H1 (cell line): ENCODE measurements at regions of chr7 and their contacts with region 1.

Region 1: DNA sequence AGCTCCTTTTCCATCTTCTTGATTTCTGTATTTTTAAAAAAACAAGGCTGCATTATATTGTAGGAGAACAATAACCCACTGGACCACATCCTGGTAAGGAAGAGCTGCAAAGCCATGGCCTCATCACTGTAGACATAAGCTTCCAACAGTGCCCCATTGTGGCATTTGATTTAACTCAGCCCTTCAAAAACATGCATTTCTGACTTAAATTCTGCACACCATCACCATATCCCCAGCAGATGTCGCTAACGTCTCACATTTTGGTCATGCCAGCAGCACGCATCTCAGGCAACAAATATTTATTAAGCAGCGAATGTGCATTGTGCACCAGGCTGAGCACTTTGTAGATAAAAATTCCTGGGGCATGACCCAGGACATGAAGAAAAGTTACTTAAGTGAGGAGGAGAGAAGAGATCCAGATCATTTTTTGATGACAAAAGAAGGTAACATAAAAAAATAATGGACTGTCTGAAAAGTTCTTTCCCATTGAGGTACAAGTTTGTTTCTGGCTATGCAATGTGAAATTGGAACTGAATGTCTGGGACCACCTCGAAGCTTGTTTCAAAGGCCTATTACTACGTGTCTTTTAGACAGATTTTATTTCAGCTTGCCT is 164.6 kb upstream of the CDCA7L start:
- DNase-seq: peak; percentile 59 to 68
- H3K4me3 ChIP-seq: no peak overlapping the region
- H3K27ac ChIP-seq: no peak overlapping the region
- H3K4me1 ChIP-seq: 0 out of 7 replicates have a peak, but pooled peaks cover 0 to 2% (median 0%) of the 10 kb centered on the region in 4 experiments
- H3K27me3 ChIP-seq: no peaks in the 10 kb centered on the region
- CTCF ChIP-seq: peak; percentile 44 to 94 (median 93)
- EP300 ChIP-seq: no peak
- POLR2A ChIP-seq: no peak
- RAD21 ChIP-seq: peak; percentile 99

Region 2: GRCh38 chr7:22082886-22083703 is 27.2 kb before region 1 on chr7:
- CTCF ChIA-PET with region 1: interaction called, 36 read pairs
- POLR2A ChIA-PET with region 1: no interaction called
- DNase-seq: peak; percentile 80 to 100
- H3K4me3 ChIP-seq: peak overlapping the region; percentile 45 to 75 (median 66)
- H3K27ac ChIP-seq: no peak overlapping the region
- H3K4me1 ChIP-seq: peaks cover 0 to 3% (median 3%) of the 10 kb centered on the region in 4 experiments; a peak in 4 of 7 replicates
- H3K27me3 ChIP-seq: peaks cover 0 to 7% (median 6%) of the 10 kb centered on the region in 4 experiments; a peak in 5 of 7 replicates
- CTCF ChIP-seq: peak; percentile 83 to 94 (median 91)
- EP300 ChIP-seq: peak; percentile 55 to 57; a peak in 2 of 3 replicates
- POLR2A ChIP-seq: no peak; a peak in 1 of 3 replicates
- RAD21 ChIP-seq: peak; percentile 87 to 94

Region 3: GRCh38 chr7:22154143-22154529 is 43.8 kb after region 1 on chr7:
- CTCF ChIA-PET with region 1: interaction called, 16 read pairs
- POLR2A ChIA-PET with region 1: no interaction called
- DNase-seq: no peak
- H3K4me3 ChIP-seq: no peak overlapping the region; a peak in 1 of 8 replicates
- H3K27ac ChIP-seq: no peak overlapping the region
- H3K4me1 ChIP-seq: peaks cover 0 to 7% (median 3%) of the 10 kb centered on the region in 4 experiments; a peak in 4 of 7 replicates
- H3K27me3 ChIP-seq: no peaks in the 10 kb centered on the region
- CTCF ChIP-seq: no peak
- EP300 ChIP-seq: no peak
- POLR2A ChIP-seq: no peak
- RAD21 ChIP-seq: no peak

Region 4: DNA sequence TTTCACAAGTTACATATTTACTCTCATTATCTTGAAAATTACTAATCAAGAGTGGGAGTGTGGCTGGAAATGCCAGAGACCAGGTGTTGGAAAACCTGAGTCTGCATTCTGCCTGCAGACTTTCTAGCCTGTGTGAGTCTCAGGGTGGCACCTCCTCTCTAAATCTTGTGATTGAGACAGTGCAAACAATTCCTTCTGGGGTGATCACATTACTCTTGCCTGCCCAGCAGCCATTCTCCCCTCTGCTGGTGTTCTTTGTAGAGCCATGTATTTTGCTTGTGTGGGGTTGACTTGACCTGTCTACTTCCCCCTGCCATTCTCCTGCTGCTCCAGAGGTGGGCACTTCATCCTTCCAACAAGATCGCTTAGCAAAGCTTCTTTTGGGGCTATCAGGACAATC is 145.5 kb after region 1 on chr7:
- CTCF ChIA-PET with region 1: interaction called, 16 read pairs
- POLR2A ChIA-PET with region 1: no interaction called
- DNase-seq: no peak
- H3K4me3 ChIP-seq: no peak overlapping the region
- H3K27ac ChIP-seq: no peak overlapping the region
- H3K4me1 ChIP-seq: peaks cover 2 to 20% (median 12%) of the 10 kb centered on the region in 4 experiments; a peak in 6 of 7 replicates
- H3K27me3 ChIP-seq: no peaks in the 10 kb centered on the region
- CTCF ChIP-seq: peak in 1 of 3 experiments; percentile 12; a peak in 1 of 4 replicates
- EP300 ChIP-seq: no peak
- POLR2A ChIP-seq: no peak
- RAD21 ChIP-seq: peak in 1 of 2 experiments; percentile 15; a peak in 1 of 4 replicates

Region 5: GRCh38 chr7:22319424-22320403 is 209.4 kb after region 1 on chr7:
- CTCF ChIA-PET with region 1: interaction called, 13 read pairs
- POLR2A ChIA-PET with region 1: no interaction called
- DNase-seq: no peak
- H3K4me3 ChIP-seq: no peak overlapping the region
- H3K27ac ChIP-seq: no peak overlapping the region
- H3K4me1 ChIP-seq: peaks cover 3 to 13% (median 8%) of the 10 kb centered on the region in 4 experiments; a peak in 4 of 7 replicates
- H3K27me3 ChIP-seq: no peaks in the 10 kb centered on the region
- CTCF ChIP-seq: no peak
- EP300 ChIP-seq: no peak
- POLR2A ChIP-seq: no peak
- RAD21 ChIP-seq: no peak

Region 6: GRCh38 chr7:22474645-22475044 is 364.3 kb after region 1 on chr7:
- CTCF ChIA-PET with region 1: interaction called, 11 read pairs
- POLR2A ChIA-PET with region 1: interaction called, 3 read pairs
- DNase-seq: no peak
- H3K4me3 ChIP-seq: no peak overlapping the region
- H3K27ac ChIP-seq: no peak overlapping the region
- H3K4me1 ChIP-seq: no peaks in the 10 kb centered on the region
- H3K27me3 ChIP-seq: no peaks in the 10 kb centered on the region
- CTCF ChIP-seq: no peak
- EP300 ChIP-seq: no peak
- POLR2A ChIP-seq: no peak
- RAD21 ChIP-seq: no peak